ENCODE measurements at regions of chr10 and their contacts with region 1.

Region 1: DNA sequence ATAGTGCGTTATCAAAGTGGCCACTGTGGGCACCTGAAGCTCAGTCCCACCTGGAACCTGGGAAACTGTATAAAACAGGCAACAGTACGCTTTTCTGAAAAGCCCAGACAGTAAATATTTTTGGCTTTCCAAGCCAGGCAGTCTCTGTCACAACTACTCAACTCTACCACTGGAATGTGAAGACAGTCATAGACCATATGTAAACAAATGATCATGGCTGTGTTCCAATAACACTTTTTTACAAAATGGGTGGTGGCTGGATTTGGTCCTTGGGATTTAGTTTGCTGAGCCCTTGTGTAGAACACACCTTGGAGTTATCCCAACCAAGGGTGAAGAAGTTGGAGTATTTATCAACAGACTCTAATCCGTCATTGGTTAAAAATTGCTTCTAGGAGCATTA is 259.9 kb downstream of the SKIDA1 start:
- DNase-seq: no peak
- ATAC-seq: no peak; the same call in 2 of the 3 replicates
- H3K4me3 ChIP-seq: no peak overlapping the region
- H3K27ac ChIP-seq: no peak overlapping the region
- H3K4me1 ChIP-seq: peaks cover 0 to 5% of the 10 kb centered on the region in 2 experiments; a peak in 1 of 5 replicates
- H3K27me3 ChIP-seq: peaks cover 0 to 5% of the 10 kb centered on the region in 2 experiments; a peak in 1 of 5 replicates
- CTCF ChIP-seq: no peak
- EP300 ChIP-seq: no peak
- POLR2A ChIP-seq: no peak
- RAD21 ChIP-seq: no peak

Region 2: GRCh38 chr10:20858292-20859124 is 407.1 kb before region 1 on chr10:
- CTCF ChIA-PET with region 1: interaction called, 21 read pairs
- POLR2A ChIA-PET with region 1: no interaction called
- in situ Hi-C with region 1: no loop called
- intact Hi-C with region 1: loop called (anchors 1 kb)
- DNase-seq: peak in 1 of 4 experiments; percentile 33
- ATAC-seq: peak; percentile 68
- H3K4me3 ChIP-seq: no peak overlapping the region
- H3K27ac ChIP-seq: no peak overlapping the region
- H3K4me1 ChIP-seq: no peaks in the 10 kb centered on the region
- H3K27me3 ChIP-seq: no peaks in the 10 kb centered on the region
- CTCF ChIP-seq: peak in 2 of 3 experiments; percentile 16 to 68; a peak in 3 of 6 replicates
- EP300 ChIP-seq: no peak
- POLR2A ChIP-seq: no peak
- RAD21 ChIP-seq: peak; percentile 67 to 84

Region 3: DNA sequence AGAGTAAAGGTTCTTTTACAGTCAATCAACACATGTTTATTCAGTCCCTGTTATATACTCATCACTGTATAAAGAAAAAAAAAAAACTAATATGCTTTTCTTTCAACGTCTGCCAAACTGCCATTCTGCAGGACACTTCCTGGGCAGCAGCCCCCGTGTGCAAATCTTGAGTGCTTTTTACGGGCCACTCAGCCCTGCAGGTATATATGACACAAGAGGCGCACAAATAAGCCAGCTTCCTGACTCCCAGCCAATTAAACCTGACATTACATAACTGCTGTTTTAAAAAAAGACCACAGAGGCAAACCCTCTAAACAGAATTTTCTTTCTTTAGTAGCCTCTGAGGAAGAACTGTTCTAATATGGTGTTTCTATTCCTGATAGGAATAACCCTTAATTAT is 105.5 kb before region 1 on chr10:
- CTCF ChIA-PET with region 1: no interaction called
- POLR2A ChIA-PET with region 1: no interaction called
- in situ Hi-C with region 1: loop called (anchors 5 kb)
- intact Hi-C with region 1: no loop called
- DNase-seq: no peak
- ATAC-seq: no peak
- H3K4me3 ChIP-seq: no peak overlapping the region
- H3K27ac ChIP-seq: no peak overlapping the region
- H3K4me1 ChIP-seq: peaks cover 0 to 6% of the 10 kb centered on the region in 2 experiments; a peak in 2 of 5 replicates
- H3K27me3 ChIP-seq: no peaks in the 10 kb centered on the region
- CTCF ChIP-seq: no peak
- EP300 ChIP-seq: no peak
- POLR2A ChIP-seq: no peak
- RAD21 ChIP-seq: no peak

Measured in K562 (cell line).